Right cardiac atrium (tissue), 5 donors: ENCODE measurements at regions of chr9 and their contacts with region 1.

Region 1: DNA sequence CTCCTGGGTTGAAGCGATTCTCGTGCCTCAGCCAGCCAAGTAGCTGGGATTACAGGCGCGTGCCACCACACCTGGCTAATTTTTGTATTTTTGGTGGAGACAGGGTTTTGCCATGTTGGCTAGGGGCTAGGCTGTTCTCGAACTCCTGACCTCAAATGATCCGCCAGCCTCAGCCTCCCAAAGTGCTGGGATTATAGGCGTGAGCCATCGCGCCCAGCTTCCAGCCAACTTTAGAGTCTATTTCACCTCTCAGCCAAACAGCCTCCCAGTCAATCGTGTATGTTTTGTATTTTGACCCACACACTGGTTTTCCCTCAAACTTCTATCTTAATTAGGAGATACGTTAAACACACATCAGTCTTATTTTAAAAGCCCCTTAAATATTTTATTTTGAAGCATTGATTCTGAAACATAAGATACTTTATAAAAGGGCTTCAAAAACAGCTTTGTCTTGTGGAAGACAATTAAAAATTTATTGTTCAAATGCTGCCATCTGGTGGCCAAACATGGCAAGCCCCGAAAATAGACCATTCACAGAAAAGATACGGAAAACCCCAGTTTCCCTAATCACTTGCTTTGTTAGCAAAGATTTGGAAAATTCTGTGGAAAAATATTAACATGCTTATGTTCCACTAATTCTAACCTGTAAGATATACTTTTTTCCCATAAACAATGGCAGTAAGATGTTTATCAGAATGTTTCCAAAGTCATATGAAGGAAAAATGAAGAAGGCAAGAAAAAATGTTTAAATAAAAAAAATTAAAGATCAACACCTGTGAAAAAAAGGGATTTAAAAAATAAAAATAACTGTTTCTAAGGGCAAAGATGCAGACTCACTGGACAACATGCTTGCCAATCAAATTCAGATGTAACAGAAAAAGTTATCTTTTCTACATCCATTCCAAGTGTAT is 33.1 kb downstream of the APTX start:
- DNase-seq: peak; percentile 44 to 79 (median 58)
- ATAC-seq: no peak
- H3K4me3 ChIP-seq: no peak overlapping the region
- H3K27ac ChIP-seq: no peak overlapping the region
- H3K4me1 ChIP-seq: no peaks in the 10 kb centered on the region
- H3K27me3 ChIP-seq: no peaks in the 10 kb centered on the region

Region 2: GRCh38 chr9:32378993-32379729 is 589.2 kb before region 1 on chr9:
- intact Hi-C with region 1: loop called (anchors 5 to 10 kb)
- DNase-seq: no peak
- ATAC-seq: peak; percentile 84 to 85
- H3K4me3 ChIP-seq: no peak overlapping the region
- H3K27ac ChIP-seq: no peak overlapping the region
- H3K4me1 ChIP-seq: no peaks in the 10 kb centered on the region
- H3K27me3 ChIP-seq: peaks cover 2% of the 10 kb centered on the region

Region 3: GRCh38 chr9:32384364-32385151 is 583.8 kb before region 1 on chr9 and contains the start of gene ACO1:
- intact Hi-C with region 1: loop called (anchors 5 to 10 kb)
- DNase-seq: peak; percentile 93 to 97 (median 96)
- ATAC-seq: peak; percentile 99 to 100
- H3K4me3 ChIP-seq: peak within 1 kb of the TSS; percentile 45
- H3K27ac ChIP-seq: peak within 1 kb of the TSS; percentile 67
- H3K4me1 ChIP-seq: peaks cover 5% of the 10 kb centered on the region
- H3K27me3 ChIP-seq: no peaks in the 10 kb centered on the region
- total RNA-seq, gene ACO1: 42.2 to 46.3 (median 43.3) TPM

Region 4: GRCh38 chr9:32579706-32580331 is 388.5 kb before region 1 on chr9:
- intact Hi-C with region 1: loop called in 3 of 4 experiments (anchors 2 to 5 kb)
- DNase-seq: peak; percentile 66 to 87 (median 75)
- ATAC-seq: peak in 1 of 2 donors; percentile 45
- H3K4me3 ChIP-seq: no peak overlapping the region
- H3K27ac ChIP-seq: no peak overlapping the region
- H3K4me1 ChIP-seq: no peaks in the 10 kb centered on the region
- H3K27me3 ChIP-seq: no peaks in the 10 kb centered on the region

Region 5: DNA sequence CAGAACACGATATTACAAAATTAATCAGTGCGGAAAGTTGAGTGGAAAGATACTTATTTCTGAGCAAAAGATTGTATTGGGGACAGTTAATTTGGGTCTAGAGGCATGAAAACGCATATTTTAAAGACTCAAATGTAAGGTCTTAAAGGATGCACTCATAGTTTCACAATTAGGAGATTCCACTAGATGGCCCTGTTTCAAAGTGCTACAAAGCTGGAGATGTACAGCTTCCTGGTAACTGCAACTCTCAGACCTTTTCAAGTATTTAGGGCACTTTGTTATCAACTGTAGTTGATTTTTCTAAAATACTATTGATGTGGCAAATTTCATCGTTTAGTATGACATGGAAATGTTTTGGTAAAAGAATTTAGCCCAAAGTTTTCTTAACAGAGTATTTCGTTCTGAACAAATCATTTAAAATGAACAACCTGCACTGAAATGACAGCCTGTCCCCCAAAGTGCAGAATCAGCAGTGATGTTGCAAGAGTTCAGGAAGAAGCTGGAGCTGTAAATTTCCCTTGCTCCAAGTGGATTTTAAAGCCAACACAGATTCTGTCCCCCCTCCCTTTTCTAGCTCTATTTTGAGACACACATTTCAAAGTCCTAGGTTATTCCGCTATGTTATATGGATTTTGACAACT is 379.2 kb before region 1 on chr9:
- intact Hi-C with region 1: loop called in 3 of 4 experiments (anchors 2 to 5 kb)
- DNase-seq: no peak
- ATAC-seq: peak; percentile 47 to 52
- H3K4me3 ChIP-seq: no peak overlapping the region
- H3K27ac ChIP-seq: no peak overlapping the region
- H3K4me1 ChIP-seq: no peaks in the 10 kb centered on the region
- H3K27me3 ChIP-seq: no peaks in the 10 kb centered on the region

Region 6: GRCh38 chr9:33233681-33234473 is 265.5 kb after region 1 on chr9:
- intact Hi-C with region 1: no loop called
- DNase-seq: peak in 1 of 3 donors; percentile 27
- ATAC-seq: peak; percentile 29 to 30
- H3K4me3 ChIP-seq: no peak overlapping the region
- H3K27ac ChIP-seq: no peak overlapping the region
- H3K4me1 ChIP-seq: no peaks in the 10 kb centered on the region
- H3K27me3 ChIP-seq: no peaks in the 10 kb centered on the region